ENCODE measurements at regions of chrX and their contacts with region 1.

Region 1: DNA sequence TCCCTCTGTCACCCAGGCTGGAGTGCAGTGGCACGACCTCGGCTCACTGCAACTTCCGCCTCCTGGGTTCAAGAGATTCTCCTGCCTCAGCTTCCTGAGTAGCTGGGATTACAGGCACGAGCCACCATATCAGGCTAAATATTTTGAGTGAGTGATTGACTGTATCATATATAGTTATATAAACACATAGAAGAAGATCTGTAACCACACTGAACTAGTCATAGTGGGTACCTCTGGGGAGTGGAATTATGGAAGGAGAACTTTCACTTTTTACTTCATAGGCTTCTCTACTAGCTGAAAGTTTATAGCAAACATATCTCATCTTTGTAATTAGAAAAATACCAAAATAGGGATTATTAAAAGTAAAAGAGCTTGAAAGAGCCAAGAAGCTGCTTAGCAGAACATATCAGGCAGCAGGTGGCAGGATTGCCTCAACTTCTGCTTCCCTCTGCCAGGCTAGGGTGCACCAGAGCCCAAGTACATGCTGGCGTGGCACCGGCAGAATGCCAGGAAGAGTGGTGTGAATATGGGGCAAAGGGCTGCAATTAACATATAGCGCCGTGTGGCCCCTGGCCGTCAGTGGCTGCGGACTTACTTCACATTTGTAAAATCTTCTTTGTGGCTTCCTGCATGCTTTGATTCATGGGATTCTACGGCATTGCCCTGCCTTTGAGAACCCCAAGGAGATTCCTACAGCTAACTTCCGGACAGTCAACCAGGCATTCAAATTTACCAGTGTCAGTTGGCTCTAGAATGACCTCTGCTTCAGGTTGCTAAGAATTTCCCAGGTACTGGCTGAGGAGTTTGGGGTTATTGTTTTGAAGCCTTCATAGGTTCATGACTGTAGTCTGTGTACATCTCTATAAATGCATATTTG is 39.4 kb upstream of the CD40LG start:
- DNase-seq: peak; percentile 26
- ATAC-seq: peak; percentile 33 to 74

Region 2: DNA sequence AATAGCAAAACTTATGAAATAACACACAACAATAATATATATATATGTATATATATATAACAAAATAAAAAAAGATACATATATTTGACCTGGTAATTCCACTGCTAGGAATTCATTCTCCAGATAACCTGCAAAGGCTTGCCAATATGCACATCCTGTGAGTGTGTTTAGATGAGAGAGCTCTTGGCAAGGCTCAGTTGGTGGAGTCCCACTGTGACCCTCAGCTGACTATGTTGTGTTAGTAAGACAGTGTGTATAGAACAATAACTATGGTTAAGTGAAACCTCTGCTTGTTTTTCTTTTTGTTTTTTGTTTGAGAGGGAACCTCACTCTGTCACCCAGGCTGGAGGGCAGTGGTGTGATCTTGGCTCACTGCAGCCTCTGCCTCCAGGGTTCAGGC is 311.5 kb after region 1 on chrX:
- intact Hi-C with region 1: loop called in 1 of 2 experiments (anchors 10 kb)
- DNase-seq: no peak
- ATAC-seq: no peak